ENCODE measurements at regions of chr4 and their contacts with region 1.

Region 1: DNA sequence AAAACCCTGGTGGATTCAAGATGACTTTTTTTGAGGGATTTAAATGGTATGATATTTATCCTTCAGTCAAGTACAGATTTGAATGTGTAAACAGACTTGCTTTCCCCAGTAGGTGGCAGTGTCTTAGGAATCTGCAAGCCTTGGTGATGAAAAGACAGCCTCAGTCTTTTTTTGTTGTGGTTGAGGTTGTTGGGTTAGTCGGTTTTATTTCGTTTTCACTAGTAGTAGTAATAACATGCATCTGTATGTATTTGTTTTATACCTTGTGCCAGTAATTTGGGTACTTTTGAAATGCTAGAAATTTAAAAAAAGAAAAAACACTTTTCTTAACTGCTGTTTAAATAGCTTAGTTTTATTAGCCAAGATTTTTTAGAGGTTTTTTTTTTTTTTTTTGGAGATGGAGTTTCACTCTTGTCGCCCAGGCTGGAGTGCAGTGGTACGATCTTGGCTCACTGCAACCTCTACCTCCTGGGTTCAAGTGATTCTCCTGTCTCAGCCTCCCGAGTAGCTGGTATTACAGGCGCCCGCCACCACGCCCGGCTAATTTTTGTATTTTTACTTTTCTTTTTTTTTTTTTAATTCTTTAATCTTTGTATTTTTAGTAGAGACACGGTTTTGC is 39.2 kb downstream of the COPS4 start:
- DNase-seq: peak; percentile 32 to 81
- ATAC-seq: peak in 1 of 2 experiments; percentile 78; a peak in 4 of 6 replicates
- H3K4me3 ChIP-seq: no peak overlapping the region
- H3K27ac ChIP-seq: no peak overlapping the region
- H3K4me1 ChIP-seq: peaks cover 20% of the 10 kb centered on the region
- CTCF ChIP-seq: peak; percentile 61
- EP300 ChIP-seq: no peak
- POLR2A ChIP-seq: no peak
- RAD21 ChIP-seq: peak; percentile 56 to 63

Region 2: GRCh38 chr4:83255584-83255983 is 181.4 kb after region 1 on chr4:
- CTCF ChIA-PET with region 1: interaction called, 11 read pairs
- POLR2A ChIA-PET with region 1: interaction called, 4 read pairs
- DNase-seq: peak; percentile 32 to 81
- ATAC-seq: no peak
- H3K4me3 ChIP-seq: no peak overlapping the region; the same call in 2 of the 3 replicates
- H3K27ac ChIP-seq: peak overlapping the region; percentile 85 to 91
- H3K4me1 ChIP-seq: peaks cover 53% of the 10 kb centered on the region
- CTCF ChIP-seq: no peak
- EP300 ChIP-seq: peak; percentile 38 to 56; a peak in 3 of 5 replicates
- POLR2A ChIP-seq: no peak
- RAD21 ChIP-seq: no peak

Region 3: DNA sequence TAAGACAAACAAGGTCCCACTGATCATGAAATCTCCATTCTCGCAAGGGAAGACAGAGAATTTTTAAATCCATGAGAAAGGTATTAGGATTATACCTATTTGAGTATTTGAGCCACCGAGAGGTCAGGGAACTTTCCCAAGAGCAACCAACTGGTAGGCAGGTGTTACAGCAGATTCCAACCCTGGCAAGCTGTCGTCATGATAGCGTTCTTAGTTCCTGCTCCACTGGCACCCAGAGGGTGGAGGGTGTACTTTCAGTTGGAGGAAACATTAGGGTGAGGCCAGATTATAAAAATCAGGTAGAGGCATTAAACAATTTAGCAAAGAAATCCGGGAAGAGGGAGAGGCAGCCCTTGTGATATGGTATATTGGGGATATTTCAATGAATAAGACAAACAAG is 187.1 kb after region 1 on chr4:
- CTCF ChIA-PET with region 1: interaction called, 11 read pairs
- POLR2A ChIA-PET with region 1: no interaction called
- DNase-seq: no peak
- ATAC-seq: no peak
- H3K4me3 ChIP-seq: no peak overlapping the region
- H3K27ac ChIP-seq: no peak overlapping the region
- H3K4me1 ChIP-seq: peaks cover 26% of the 10 kb centered on the region
- CTCF ChIP-seq: no peak
- EP300 ChIP-seq: no peak
- POLR2A ChIP-seq: no peak
- RAD21 ChIP-seq: no peak

Region 4: DNA sequence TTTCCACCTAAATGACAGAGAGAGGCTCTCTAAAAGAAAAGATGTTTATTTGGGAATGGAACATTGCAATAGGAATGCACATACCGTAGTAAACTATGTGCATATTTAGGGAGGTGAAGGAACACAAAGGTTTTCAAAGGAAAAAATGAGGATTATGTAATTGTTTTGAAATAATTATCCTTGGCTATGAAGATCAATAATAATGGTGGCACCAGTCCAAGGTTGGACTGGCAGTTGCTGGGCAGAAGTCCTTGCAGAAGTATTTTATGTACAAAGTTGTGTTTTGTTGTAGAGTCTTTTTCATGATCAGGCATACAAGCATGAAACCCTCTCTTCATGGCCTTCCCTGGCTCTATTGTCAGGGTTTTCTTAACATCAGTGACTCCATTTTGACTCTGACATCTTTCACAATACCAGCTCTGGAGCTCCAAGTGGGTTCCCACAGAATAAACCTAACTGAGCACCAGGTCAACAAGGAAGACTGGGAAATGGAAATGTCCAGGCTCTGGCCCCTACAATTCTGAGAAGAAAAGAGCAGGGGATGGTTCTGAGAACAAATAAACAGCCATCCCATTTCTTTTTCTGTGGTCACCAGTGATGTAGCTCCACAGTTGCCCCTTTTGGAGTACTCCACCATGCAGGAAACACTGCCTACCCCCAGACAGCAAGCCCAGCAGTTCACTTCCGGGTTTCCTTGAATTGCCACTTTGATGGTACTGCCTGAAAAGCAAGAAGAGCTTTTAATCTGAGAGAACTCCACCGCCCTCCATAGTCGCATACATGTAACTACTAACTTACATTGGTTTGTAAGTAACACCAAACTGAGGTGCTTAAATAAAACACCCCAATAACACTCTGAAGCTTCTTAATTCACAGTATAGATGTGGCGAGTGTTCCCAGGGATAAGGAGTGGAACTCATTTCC is 313.8 kb after region 1 on chr4:
- CTCF ChIA-PET with region 1: no interaction called
- POLR2A ChIA-PET with region 1: no interaction called
- DNase-seq: peak in 1 of 2 experiments; percentile 8
- ATAC-seq: no peak
- H3K4me3 ChIP-seq: no peak overlapping the region
- H3K27ac ChIP-seq: no peak overlapping the region
- H3K4me1 ChIP-seq: no peaks in the 10 kb centered on the region
- CTCF ChIP-seq: no peak
- EP300 ChIP-seq: no peak
- POLR2A ChIP-seq: no peak
- RAD21 ChIP-seq: peak in 1 of 2 experiments; percentile 3; a peak in 1 of 5 replicates